Panc1 (cell line): ENCODE measurements at regions of chr22 and their contacts with region 1.

Region 1: GRCh38 chr22:44349591-44349990 is 36.8 kb upstream of the SHISAL1 start:
- DNase-seq: no peak
- ATAC-seq: no peak
- H3K4me3 ChIP-seq: no peak overlapping the region
- H3K27ac ChIP-seq: no peak overlapping the region
- H3K4me1 ChIP-seq: no peaks in the 10 kb centered on the region
- H3K27me3 ChIP-seq: no peaks in the 10 kb centered on the region; the same call in 1 of the 2 replicates
- CTCF ChIP-seq: no peak

Region 2: DNA sequence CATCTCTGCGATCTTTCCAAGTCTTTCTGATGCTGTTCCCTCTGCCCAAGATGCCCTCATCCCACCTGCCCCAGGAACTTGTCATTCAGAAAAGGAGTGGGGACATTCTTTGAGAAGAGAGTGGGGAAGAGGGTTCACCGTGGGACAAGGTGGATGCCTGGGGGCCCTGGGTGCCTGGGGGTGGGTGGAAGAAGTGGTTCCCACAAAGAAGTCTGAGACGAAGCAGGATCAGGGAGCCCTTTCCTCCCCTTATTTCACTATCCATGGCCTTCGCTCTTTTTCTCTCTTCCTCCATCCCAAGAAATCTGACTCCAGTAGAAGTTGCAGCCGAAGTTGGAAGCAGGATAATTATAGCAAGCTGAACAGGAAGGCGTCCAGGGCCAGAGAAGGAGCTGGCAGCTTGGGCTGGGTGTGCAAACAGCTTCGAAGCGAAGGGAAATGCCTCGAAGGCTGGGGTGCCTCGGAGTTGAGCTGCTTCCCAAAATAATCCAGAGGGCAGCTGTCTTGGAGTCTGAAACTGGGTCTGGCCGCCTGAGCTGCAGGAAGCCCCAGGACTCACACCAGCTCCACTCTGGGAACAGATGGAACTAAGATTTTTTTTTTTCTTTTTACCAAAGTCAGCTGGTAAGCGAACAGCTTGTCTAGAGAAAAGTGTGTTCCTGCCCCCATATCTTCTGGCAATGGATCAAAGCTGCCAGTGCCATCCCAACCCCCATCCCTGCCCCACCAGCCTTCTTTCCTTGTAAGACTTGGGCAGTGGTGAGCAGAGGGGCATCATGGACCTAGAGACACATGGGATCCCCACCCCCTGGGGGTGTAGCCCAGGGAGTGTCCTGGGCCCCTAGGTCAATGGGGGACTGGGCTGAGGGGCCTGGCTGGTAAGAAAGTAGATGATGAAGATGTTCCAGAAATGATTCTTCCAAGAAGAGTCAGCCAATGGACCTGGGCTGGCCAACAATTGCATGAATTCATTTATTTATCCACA is 137.4 kb before region 1 on chr22:
- CTCF ChIA-PET with region 1: no interaction called
- POLR2A ChIA-PET with region 1: no interaction called
- in situ Hi-C with region 1: no loop called
- intact Hi-C with region 1: no loop called
- DNase-seq: no peak
- ATAC-seq: no peak
- H3K4me3 ChIP-seq: no peak overlapping the region
- H3K27ac ChIP-seq: no peak overlapping the region
- H3K4me1 ChIP-seq: no peaks in the 10 kb centered on the region
- H3K27me3 ChIP-seq: no peaks in the 10 kb centered on the region
- CTCF ChIP-seq: no peak

Region 3: GRCh38 chr22:44305888-44306287 is 43.7 kb before region 1 on chr22:
- CTCF ChIA-PET with region 1: interaction called, 11 read pairs
- POLR2A ChIA-PET with region 1: no interaction called
- in situ Hi-C with region 1: no loop called
- intact Hi-C with region 1: no loop called
- DNase-seq: no peak
- ATAC-seq: no peak
- H3K4me3 ChIP-seq: no peak overlapping the region
- H3K27ac ChIP-seq: no peak overlapping the region
- H3K4me1 ChIP-seq: no peaks in the 10 kb centered on the region
- H3K27me3 ChIP-seq: no peaks in the 10 kb centered on the region
- CTCF ChIP-seq: no peak

Region 4: GRCh38 chr22:44406341-44407170 is 57.0 kb after region 1 on chr22:
- CTCF ChIA-PET with region 1: no interaction called
- POLR2A ChIA-PET with region 1: no interaction called
- in situ Hi-C with region 1: no loop called
- intact Hi-C with region 1: no loop called
- DNase-seq: no peak
- ATAC-seq: no peak; the same call in 1 of the 2 replicates
- H3K4me3 ChIP-seq: no peak overlapping the region
- H3K27ac ChIP-seq: no peak overlapping the region
- H3K4me1 ChIP-seq: no peaks in the 10 kb centered on the region
- H3K27me3 ChIP-seq: no peaks in the 10 kb centered on the region
- CTCF ChIP-seq: no peak